ENCODE measurements at regions of chr1 and their contacts with region 1.

Region 1: GRCh38 chr1:194568610-194569009 is 1382.2 kb upstream of the B3GALT2 start:
- DNase-seq: no peak
- ATAC-seq: no peak
- H3K4me3 ChIP-seq: no peak overlapping the region
- H3K4me3 Mint-ChIP-seq: no peak overlapping the region
- H3K27ac ChIP-seq: no peak overlapping the region
- H3K27ac Mint-ChIP-seq: no peak overlapping the region
- H3K4me1 ChIP-seq: no peaks in the 10 kb centered on the region
- H3K4me1 Mint-ChIP-seq: no peaks in the 10 kb centered on the region
- H3K27me3 ChIP-seq: no peaks in the 10 kb centered on the region
- H3K27me3 Mint-ChIP-seq: no peaks in the 10 kb centered on the region

Region 2: DNA sequence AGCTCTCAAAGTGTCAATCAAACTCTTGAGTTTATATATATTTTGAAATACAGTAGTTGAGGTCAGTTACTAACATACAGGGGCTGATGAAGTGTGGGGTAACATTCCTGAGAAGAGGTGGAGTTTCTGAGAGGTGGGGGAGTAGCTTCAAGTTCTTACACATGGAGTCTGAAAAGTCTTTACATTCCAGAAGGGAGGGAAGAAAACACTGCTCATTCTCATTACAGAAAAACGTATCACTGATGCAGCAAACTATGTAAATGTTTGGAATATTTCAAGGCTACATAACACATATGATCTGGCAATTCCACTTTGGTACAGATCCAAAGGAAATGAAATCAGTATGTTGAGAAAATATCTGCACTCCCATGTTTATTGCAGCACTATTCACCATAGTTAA is 316.4 kb before region 1 on chr1:
- CTCF ChIA-PET with region 1: no interaction called
- POLR2A ChIA-PET with region 1: no interaction called
- intact Hi-C with region 1: no loop called
- DNase-seq: no peak
- ATAC-seq: no peak
- H3K4me3 ChIP-seq: no peak overlapping the region
- H3K4me3 Mint-ChIP-seq: no peak overlapping the region
- H3K27ac ChIP-seq: no peak overlapping the region
- H3K27ac Mint-ChIP-seq: no peak overlapping the region
- H3K4me1 ChIP-seq: no peaks in the 10 kb centered on the region
- H3K4me1 Mint-ChIP-seq: no peaks in the 10 kb centered on the region
- H3K27me3 ChIP-seq: no peaks in the 10 kb centered on the region
- H3K27me3 Mint-ChIP-seq: no peaks in the 10 kb centered on the region

Region 3: DNA sequence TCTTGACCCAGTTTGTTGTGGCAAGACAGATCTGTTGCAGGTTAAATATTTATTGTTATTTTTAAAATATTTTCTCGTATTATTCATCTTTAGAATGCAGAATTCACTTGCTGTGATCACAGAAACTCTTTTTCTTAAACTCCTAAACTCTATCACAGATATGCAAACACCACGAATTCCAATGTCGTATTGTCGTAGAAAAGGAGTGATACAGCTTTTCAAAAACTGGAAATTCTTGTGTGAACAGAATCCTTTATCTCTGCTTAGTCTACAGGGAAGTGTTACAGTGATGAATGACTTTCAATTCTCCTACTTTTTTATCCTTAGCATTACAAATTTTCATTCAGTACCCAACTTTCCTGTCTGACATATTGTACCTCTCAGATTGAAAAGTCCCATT is 52.7 kb before region 1 on chr1:
- CTCF ChIA-PET with region 1: no interaction called
- POLR2A ChIA-PET with region 1: no interaction called
- intact Hi-C with region 1: loop called in 1 of 2 experiments (anchors 5 kb)
- DNase-seq: no peak
- ATAC-seq: no peak
- H3K4me3 ChIP-seq: no peak overlapping the region
- H3K4me3 Mint-ChIP-seq: no peak overlapping the region
- H3K27ac ChIP-seq: no peak overlapping the region
- H3K27ac Mint-ChIP-seq: no peak overlapping the region
- H3K4me1 ChIP-seq: no peaks in the 10 kb centered on the region
- H3K4me1 Mint-ChIP-seq: no peaks in the 10 kb centered on the region
- H3K27me3 ChIP-seq: no peaks in the 10 kb centered on the region
- H3K27me3 Mint-ChIP-seq: no peaks in the 10 kb centered on the region